CD4-positive, alpha-beta memory T cell (primary cell): ENCODE measurements at regions of chr3 and their contacts with region 1.

Region 1: DNA sequence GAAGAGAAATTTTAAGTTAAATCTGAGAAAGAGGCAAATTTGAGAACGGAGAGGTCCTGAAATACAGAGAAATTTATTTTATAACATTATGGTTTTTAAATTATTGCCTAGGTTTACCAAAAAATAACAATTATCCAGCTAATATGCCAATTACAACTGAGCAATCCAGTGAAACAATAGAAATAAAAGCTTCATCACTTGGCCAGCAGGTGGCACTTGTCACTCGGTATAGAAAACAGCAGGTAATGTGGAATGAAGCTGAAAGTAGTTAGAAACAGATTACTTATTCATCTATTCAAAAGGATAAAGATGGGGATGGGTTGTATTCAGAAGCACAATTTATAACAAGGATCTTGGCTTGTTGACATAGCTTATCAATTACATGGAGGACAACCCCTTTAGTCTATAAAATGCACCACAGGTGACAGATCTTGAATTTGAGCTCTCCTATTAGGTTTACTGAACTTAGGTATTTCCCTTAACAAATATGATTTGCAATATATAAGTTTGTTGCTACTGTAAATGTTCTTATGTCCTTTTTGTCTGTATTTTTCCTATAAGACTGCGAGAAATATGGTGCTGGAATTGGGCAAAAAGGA is 70.1 kb upstream of the GUCA1C start:
- DNase-seq: peak in 4 of 5 donors; percentile 29 to 40 (median 34)
- H3K4me3 ChIP-seq: no peak overlapping the region
- H3K4me3 Mint-ChIP-seq: no peak overlapping the region
- H3K27ac ChIP-seq: no peak overlapping the region
- H3K27ac Mint-ChIP-seq: no peak overlapping the region
- H3K4me1 ChIP-seq: no peaks in the 10 kb centered on the region
- H3K4me1 Mint-ChIP-seq: peaks cover 0 to 2% (median 0%) of the 10 kb centered on the region in 4 donors
- H3K27me3 ChIP-seq: no peaks in the 10 kb centered on the region
- H3K27me3 Mint-ChIP-seq: peaks cover under 1 to 4% of the 10 kb centered on the region in 2 donors

Region 2: GRCh38 chr3:109081746-109082510 is 58.2 kb after region 1 on chr3:
- CTCF ChIA-PET with region 1: interaction called, 14 read pairs
- POLR2A ChIA-PET with region 1: no interaction called
- intact Hi-C with region 1: loop called (anchors 5 kb)
- DNase-seq: peak in 4 of 5 donors; percentile 2 to 30 (median 17)
- H3K4me3 ChIP-seq: no peak overlapping the region
- H3K4me3 Mint-ChIP-seq: peak overlapping the region in 1 of 8 donors; percentile 23
- H3K27ac ChIP-seq: no peak overlapping the region
- H3K27ac Mint-ChIP-seq: no peak overlapping the region
- H3K4me1 ChIP-seq: no peaks in the 10 kb centered on the region
- H3K4me1 Mint-ChIP-seq: no peaks in the 10 kb centered on the region
- H3K27me3 ChIP-seq: peaks cover 5% of the 10 kb centered on the region
- H3K27me3 Mint-ChIP-seq: peaks cover 10 to 17% of the 10 kb centered on the region in 2 donors